PC-9 (cell line): ENCODE measurements at regions of chr22 and their contacts with region 1.

Region 1: GRCh38 chr22:41517172-41518047 is 26.9 kb downstream of the POLR3H start:
- DNase-seq: peak; percentile 53 to 75
- H3K4me3 ChIP-seq: no peak overlapping the region
- H3K27ac ChIP-seq: peak overlapping the region; percentile 9; the same call in 1 of the 2 replicates
- H3K4me1 ChIP-seq: peaks cover 18% of the 10 kb centered on the region
- H3K27me3 ChIP-seq: no peaks in the 10 kb centered on the region
- CTCF ChIP-seq: peak; percentile 99

Region 2: GRCh38 chr22:41181349-41182241 is 335.8 kb before region 1 on chr22:
- CTCF ChIA-PET with region 1: no interaction called
- POLR2A ChIA-PET with region 1: no interaction called
- intact Hi-C with region 1: loop called (anchors 10 kb)
- DNase-seq: peak; percentile 55 to 89
- H3K4me3 ChIP-seq: no peak overlapping the region; the same call in 1 of the 2 replicates
- H3K27ac ChIP-seq: peak overlapping the region; percentile 65
- H3K4me1 ChIP-seq: peaks cover 19% of the 10 kb centered on the region
- H3K27me3 ChIP-seq: no peaks in the 10 kb centered on the region
- CTCF ChIP-seq: no peak

Region 3: GRCh38 chr22:41256254-41256897 is 261.0 kb before region 1 on chr22:
- CTCF ChIA-PET with region 1: no interaction called
- POLR2A ChIA-PET with region 1: no interaction called
- intact Hi-C with region 1: loop called (anchors 5 kb)
- DNase-seq: peak; percentile 45 to 80
- H3K4me3 ChIP-seq: no peak overlapping the region
- H3K27ac ChIP-seq: peak overlapping the region; percentile 48; the same call in 1 of the 2 replicates
- H3K4me1 ChIP-seq: peaks cover 22% of the 10 kb centered on the region
- H3K27me3 ChIP-seq: no peaks in the 10 kb centered on the region
- CTCF ChIP-seq: no peak; the same call in none of the 2 replicates

Region 4: GRCh38 chr22:41403532-41404318 is 113.7 kb before region 1 on chr22:
- CTCF ChIA-PET with region 1: interaction called, 12 read pairs
- POLR2A ChIA-PET with region 1: no interaction called
- intact Hi-C with region 1: loop called (anchors 1 kb)
- DNase-seq: peak; percentile 82 to 83
- H3K4me3 ChIP-seq: no peak overlapping the region
- H3K27ac ChIP-seq: no peak overlapping the region
- H3K4me1 ChIP-seq: peaks cover 13% of the 10 kb centered on the region
- H3K27me3 ChIP-seq: no peaks in the 10 kb centered on the region
- CTCF ChIP-seq: peak; percentile 97

Region 5: GRCh38 chr22:41468381-41469217 is 48.8 kb before region 1 on chr22 and contains the starts of genes ACO2 and PHF5A:
- CTCF ChIA-PET with region 1: interaction called, 4 read pairs
- POLR2A ChIA-PET with region 1: no interaction called
- intact Hi-C with region 1: loop called (anchors 1 kb)
- DNase-seq: peak; percentile 94 to 96
- H3K4me3 ChIP-seq: peak within 1 kb of the TSS; percentile 84
- H3K27ac ChIP-seq: peak within 1 kb of the TSS; percentile 78
- H3K4me1 ChIP-seq: peaks cover 25% of the 10 kb centered on the region
- H3K27me3 ChIP-seq: no peaks in the 10 kb centered on the region
- CTCF ChIP-seq: no peak
- total RNA-seq, gene ACO2: 76.7 and 80.0 TPM in 2 replicates
- total RNA-seq, gene PHF5A: 49.1 and 62.9 TPM in 2 replicates

Region 6: DNA sequence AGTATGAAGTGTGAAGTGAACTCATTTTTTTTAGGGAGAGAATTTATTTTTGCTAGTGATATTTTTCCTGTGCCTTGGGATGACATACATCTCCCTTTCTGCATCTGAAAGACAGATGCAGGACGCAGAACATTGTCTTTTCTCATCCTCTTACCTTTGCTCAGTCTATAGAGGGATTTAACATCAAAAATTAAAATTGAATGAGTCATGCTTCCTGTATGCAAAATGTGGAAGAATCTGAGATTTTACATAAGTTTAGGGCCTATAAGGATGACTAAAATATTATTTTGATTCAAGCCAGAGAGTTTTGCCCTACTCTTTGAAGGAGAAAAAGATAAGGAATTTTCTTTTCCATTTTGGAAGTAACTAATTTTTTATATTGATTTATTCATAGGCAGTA is 131.0 kb after region 1 on chr22:
- CTCF ChIA-PET with region 1: no interaction called
- POLR2A ChIA-PET with region 1: no interaction called
- intact Hi-C with region 1: no loop called
- DNase-seq: no peak
- H3K4me3 ChIP-seq: no peak overlapping the region
- H3K27ac ChIP-seq: peak overlapping the region; percentile 32; the same call in 1 of the 2 replicates
- H3K4me1 ChIP-seq: no peaks in the 10 kb centered on the region
- H3K27me3 ChIP-seq: no peaks in the 10 kb centered on the region
- CTCF ChIP-seq: no peak